ENCODE measurements at regions of chr9 and their contacts with region 1.

Region 1: DNA sequence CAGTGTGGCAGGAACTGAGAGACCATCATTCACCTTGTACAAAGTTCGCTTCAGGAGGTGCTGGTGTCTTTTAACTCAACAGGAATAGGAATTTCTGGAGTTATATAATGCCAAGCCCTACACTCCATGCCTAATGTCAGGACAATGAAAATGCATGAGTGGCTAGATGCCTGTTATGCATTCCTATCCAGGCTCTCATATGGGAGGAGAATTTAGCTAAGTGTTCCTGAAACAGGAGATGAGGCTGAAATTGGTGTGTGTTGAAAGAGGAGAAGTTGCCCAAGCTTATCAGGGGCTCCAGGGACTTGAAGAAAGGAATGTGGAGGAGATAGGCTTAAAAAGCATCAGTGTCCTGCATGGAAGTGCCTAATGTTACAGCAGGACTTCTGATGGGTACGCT is 26.8 kb upstream of the PRUNE2 start:
- DNase-seq: no peak
- H3K4me3 ChIP-seq: no peak overlapping the region
- CTCF ChIP-seq: no peak

Region 2: GRCh38 chr9:76969716-76970115 is 37.0 kb after region 1 on chr9:
- in situ Hi-C with region 1: loop called (anchors 5 kb)
- DNase-seq: no peak
- H3K4me3 ChIP-seq: no peak overlapping the region
- CTCF ChIP-seq: no peak

Region 3: DNA sequence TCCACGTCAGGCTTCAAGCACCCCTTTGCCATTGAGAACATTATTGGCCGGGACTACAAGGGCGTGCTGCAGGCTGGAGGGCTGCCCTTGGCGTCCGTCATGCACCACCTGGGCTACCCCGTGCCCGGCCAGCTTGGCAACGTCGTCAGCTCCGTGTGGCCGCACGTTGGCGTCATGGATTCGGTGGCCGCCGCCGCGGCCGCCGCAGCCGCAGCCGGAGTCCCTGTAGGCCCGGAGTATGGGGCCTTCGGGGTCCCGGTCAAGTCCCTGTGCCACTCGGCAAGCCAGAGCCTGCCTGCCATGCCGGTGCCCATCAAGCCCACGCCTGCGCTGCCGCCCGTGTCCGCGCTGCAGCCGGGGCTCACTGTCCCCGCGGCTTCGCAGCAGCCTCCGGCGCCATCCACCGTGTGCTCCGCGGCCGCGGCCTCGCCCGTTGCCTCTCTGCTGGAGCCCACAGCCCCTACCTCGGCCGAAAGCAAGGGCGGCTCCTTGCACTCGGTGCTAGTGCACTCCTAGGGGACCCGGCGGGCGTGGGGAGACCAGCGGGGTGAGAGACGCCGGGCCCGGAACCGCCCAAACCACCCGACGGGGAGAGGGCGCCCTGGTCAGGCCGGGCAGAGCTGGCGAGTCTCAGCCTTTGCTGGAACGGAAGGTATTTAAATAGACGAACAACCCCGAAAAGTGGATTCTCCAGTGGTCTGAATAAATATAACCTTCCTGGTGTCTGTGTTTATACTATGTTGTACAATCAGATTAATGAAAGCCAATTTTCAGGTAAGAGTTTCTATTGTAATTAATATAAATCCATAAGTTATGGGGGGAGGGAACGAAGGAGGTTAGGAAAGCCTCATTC is 87.9 kb after region 1 on chr9:
- in situ Hi-C with region 1: no loop called
- DNase-seq: no peak
- H3K4me3 ChIP-seq: no peak overlapping the region
- CTCF ChIP-seq: no peak